Caco-2 (cell line): ENCODE measurements at regions of chr3 and their contacts with region 1.

Region 1: DNA sequence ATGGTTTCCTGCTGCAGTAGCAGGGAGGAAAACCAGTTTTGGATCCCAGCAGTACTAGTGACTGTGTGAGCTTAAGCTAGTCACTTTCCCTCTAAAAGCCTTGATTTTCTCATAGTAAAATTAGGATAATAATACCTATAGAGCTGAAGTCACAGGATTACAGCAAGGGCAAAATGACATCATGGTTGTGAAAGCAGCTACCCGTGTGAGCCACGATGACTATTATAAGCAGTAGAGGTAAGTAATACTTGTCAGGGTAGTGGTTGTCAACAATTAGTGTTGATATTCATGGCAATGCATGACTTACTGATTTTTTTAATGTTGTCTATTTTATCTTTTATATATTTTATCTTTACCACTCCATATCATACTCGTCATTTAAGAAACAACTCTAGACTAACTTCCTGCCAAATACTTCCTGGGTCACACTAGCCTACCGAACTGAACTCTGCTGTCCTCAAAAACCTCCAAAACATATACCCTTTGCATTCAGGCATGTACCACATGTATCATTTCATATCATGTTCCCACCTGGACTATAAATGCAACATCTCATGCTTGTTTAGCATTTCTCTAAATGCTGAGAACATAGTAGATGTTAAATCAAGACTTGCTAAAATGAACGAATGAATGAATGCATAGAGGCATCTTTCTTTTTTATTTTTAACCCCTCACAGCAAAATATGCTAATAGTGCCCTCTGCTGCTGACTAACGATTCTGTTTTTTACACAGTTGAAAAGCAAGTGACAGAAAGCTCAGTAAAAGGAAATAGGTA is 172.6 kb downstream of the P3H2 start:
- DNase-seq: peak in 1 of 2 experiments; percentile 44
- H3K4me3 ChIP-seq: no peak overlapping the region
- H3K4me3 Mint-ChIP-seq: no peak overlapping the region
- H3K27ac Mint-ChIP-seq: no peak overlapping the region
- H3K4me1 ChIP-seq: no peaks in the 10 kb centered on the region
- H3K4me1 Mint-ChIP-seq: peaks cover 7% of the 10 kb centered on the region
- H3K27me3 ChIP-seq: no peaks in the 10 kb centered on the region
- H3K27me3 Mint-ChIP-seq: no peaks in the 10 kb centered on the region
- CTCF ChIP-seq: peak; percentile 48 to 70

Region 2: DNA sequence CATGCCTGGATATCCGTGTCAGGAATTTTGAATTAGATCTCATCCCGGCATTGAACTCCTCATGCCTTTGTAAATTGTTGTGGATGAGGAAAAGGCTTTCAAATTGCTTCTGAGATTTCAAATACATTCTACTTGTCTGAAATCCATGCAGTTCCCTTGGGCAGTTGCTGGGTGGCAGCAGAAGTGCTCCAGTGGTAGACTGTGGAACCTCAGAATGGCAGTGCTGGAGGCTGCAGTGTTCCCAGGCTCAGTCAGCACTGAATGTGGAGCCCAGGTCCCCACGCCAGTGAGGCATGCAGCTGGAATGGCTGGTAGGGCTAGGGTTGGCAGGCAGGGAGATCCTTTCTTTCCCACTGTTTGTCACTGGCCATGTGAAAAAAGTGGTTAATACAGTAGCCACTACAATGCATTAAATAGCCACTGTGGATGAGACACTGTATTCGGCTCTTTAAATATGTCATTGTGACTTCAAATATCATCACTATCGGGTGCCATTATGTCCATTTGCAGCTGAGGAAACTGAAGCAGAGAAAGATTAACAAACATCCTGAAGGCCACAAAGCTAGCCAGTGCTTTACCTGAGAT is 677.8 kb before region 1 on chr3:
- CTCF ChIA-PET with region 1: interaction called, 16 read pairs
- POLR2A ChIA-PET with region 1: no interaction called
- intact Hi-C with region 1: loop called (anchors 1 kb)
- DNase-seq: peak; percentile 73 to 76
- H3K4me3 ChIP-seq: no peak overlapping the region
- H3K4me3 Mint-ChIP-seq: no peak overlapping the region
- H3K27ac Mint-ChIP-seq: no peak overlapping the region
- H3K4me1 ChIP-seq: no peaks in the 10 kb centered on the region
- H3K4me1 Mint-ChIP-seq: peaks cover 13% of the 10 kb centered on the region
- H3K27me3 ChIP-seq: no peaks in the 10 kb centered on the region
- H3K27me3 Mint-ChIP-seq: no peaks in the 10 kb centered on the region
- CTCF ChIP-seq: peak; percentile 66 to 90

Region 3: DNA sequence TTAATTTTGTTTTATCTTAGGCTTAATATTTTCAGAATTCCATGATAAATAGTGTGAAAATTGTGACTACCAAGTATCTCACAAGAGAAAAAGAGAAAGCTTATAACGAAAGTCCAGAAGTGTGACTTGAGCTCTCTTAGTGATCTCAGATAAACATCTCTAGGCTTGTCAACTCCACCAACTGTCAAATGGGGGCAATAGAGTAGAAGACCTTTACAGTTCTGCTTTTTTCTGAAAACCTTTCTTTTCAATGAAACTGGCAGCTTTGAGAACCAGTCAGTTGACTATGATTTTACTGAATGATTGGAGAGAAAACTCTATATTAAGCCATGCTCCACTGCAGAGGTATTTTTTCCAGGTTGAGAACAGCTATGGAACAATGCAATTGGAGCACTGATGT is 436.1 kb before region 1 on chr3:
- CTCF ChIA-PET with region 1: interaction called, 3 read pairs
- POLR2A ChIA-PET with region 1: no interaction called
- intact Hi-C with region 1: loop called (anchors 10 kb)
- DNase-seq: no peak
- H3K4me3 ChIP-seq: no peak overlapping the region
- H3K4me3 Mint-ChIP-seq: no peak overlapping the region
- H3K27ac Mint-ChIP-seq: peak overlapping the region; percentile 44
- H3K4me1 ChIP-seq: peaks cover 5% of the 10 kb centered on the region
- H3K4me1 Mint-ChIP-seq: peaks cover 14% of the 10 kb centered on the region
- H3K27me3 ChIP-seq: no peaks in the 10 kb centered on the region
- H3K27me3 Mint-ChIP-seq: peaks cover 2% of the 10 kb centered on the region
- CTCF ChIP-seq: no peak

Region 4: DNA sequence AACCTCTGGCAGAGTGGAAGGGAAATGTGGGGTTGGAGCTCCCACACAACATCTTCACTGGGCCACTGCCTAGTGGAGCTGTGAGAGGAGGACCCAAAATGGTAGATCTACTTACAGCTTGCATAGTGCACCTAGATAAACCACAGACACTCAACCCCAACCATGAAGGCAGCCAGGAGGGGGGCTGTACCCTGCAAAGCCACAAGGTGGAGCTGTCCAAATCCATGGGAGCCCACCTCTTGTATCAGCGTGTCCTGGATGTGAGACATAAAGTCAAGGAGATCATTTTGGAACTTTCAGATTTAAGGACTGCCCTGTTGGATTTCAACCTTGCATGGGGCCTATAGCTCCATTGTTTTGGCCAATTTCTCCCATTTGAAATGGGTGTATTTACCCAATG is 296.1 kb before region 1 on chr3:
- CTCF ChIA-PET with region 1: interaction called, 7 read pairs
- POLR2A ChIA-PET with region 1: no interaction called
- intact Hi-C with region 1: loop called (anchors 1 kb)
- DNase-seq: peak; percentile 39 to 60
- H3K4me3 ChIP-seq: no peak overlapping the region
- H3K4me3 Mint-ChIP-seq: no peak overlapping the region
- H3K27ac Mint-ChIP-seq: no peak overlapping the region
- H3K4me1 ChIP-seq: no peaks in the 10 kb centered on the region
- H3K4me1 Mint-ChIP-seq: no peaks in the 10 kb centered on the region
- H3K27me3 ChIP-seq: no peaks in the 10 kb centered on the region
- H3K27me3 Mint-ChIP-seq: peaks cover 2% of the 10 kb centered on the region
- CTCF ChIP-seq: peak; percentile 56 to 64

Region 5: DNA sequence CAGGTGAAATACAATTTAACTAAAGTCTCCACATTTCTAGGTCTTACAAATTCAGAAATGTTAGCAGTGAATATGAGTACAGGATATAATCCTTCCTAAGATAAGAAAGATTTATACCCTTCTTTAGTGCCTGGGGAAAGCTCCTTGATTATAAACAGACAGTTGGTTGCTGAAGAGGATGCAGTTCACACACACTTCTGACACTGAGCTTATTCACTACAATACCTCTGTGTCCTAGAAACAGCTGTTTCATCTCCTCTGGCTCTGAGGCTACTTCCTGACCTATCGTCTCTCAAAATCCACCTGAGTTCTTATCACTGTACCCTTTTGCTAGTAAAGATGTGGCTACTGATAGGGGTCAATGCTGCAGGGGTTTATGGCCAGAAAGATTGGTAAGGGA is 259.9 kb before region 1 on chr3:
- CTCF ChIA-PET with region 1: interaction called, 12 read pairs
- POLR2A ChIA-PET with region 1: no interaction called
- intact Hi-C with region 1: loop called (anchors 1 kb)
- DNase-seq: peak in 1 of 2 experiments; percentile 6
- H3K4me3 ChIP-seq: no peak overlapping the region
- H3K4me3 Mint-ChIP-seq: no peak overlapping the region
- H3K27ac Mint-ChIP-seq: no peak overlapping the region
- H3K4me1 ChIP-seq: peaks cover 21% of the 10 kb centered on the region
- H3K4me1 Mint-ChIP-seq: peaks cover 8% of the 10 kb centered on the region
- H3K27me3 ChIP-seq: no peaks in the 10 kb centered on the region
- H3K27me3 Mint-ChIP-seq: no peaks in the 10 kb centered on the region
- CTCF ChIP-seq: no peak

Region 6: GRCh38 chr3:189756220-189757078 is 191.7 kb before region 1 on chr3:
- CTCF ChIA-PET with region 1: no interaction called
- POLR2A ChIA-PET with region 1: no interaction called
- intact Hi-C with region 1: loop called (anchors 10 kb)
- DNase-seq: peak; percentile 46 to 77
- H3K4me3 ChIP-seq: no peak overlapping the region
- H3K4me3 Mint-ChIP-seq: no peak overlapping the region
- H3K27ac Mint-ChIP-seq: no peak overlapping the region
- H3K4me1 ChIP-seq: peaks cover 9% of the 10 kb centered on the region; the same call in 1 of the 2 replicates
- H3K4me1 Mint-ChIP-seq: peaks cover 7% of the 10 kb centered on the region
- H3K27me3 ChIP-seq: no peaks in the 10 kb centered on the region
- H3K27me3 Mint-ChIP-seq: no peaks in the 10 kb centered on the region
- CTCF ChIP-seq: no peak

Region 7: DNA sequence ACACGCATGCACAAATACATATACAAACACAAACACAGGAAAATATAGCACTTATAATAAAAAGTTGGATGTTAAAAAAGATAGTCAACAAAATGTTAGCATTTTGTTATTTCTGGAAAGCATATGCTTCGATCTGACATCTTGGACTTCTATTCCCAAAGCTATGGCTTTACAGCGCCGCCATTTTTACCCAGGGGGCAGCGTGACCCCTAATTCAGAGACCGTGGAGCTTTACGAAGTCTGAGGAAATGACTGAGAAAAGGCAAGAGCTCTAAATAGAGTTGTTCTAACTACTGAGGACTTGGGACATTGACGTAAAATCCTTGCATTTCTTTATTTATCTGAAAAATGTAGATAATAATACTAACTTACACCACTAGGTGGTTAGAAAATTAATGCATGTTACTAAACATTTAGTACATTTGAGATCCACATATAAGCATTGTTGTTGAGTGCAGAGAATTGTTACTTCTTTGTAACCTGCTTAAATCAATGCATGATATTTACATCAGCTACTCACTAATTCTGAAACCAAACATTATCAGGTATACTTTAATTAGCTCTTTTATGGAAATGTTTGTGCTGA is 161.6 kb before region 1 on chr3:
- CTCF ChIA-PET with region 1: interaction called, 4 read pairs
- POLR2A ChIA-PET with region 1: no interaction called
- intact Hi-C with region 1: loop called (anchors 10 kb)
- DNase-seq: no peak
- H3K4me3 ChIP-seq: no peak overlapping the region
- H3K4me3 Mint-ChIP-seq: no peak overlapping the region
- H3K27ac Mint-ChIP-seq: no peak overlapping the region
- H3K4me1 ChIP-seq: peaks cover 4% of the 10 kb centered on the region; the same call in 1 of the 2 replicates
- H3K4me1 Mint-ChIP-seq: peaks cover 7% of the 10 kb centered on the region
- H3K27me3 ChIP-seq: no peaks in the 10 kb centered on the region
- H3K27me3 Mint-ChIP-seq: no peaks in the 10 kb centered on the region
- CTCF ChIP-seq: peak in 1 of 2 experiments; percentile 10